ENCODE measurements at regions of chr17 and their contacts with region 1.

Region 1: DNA sequence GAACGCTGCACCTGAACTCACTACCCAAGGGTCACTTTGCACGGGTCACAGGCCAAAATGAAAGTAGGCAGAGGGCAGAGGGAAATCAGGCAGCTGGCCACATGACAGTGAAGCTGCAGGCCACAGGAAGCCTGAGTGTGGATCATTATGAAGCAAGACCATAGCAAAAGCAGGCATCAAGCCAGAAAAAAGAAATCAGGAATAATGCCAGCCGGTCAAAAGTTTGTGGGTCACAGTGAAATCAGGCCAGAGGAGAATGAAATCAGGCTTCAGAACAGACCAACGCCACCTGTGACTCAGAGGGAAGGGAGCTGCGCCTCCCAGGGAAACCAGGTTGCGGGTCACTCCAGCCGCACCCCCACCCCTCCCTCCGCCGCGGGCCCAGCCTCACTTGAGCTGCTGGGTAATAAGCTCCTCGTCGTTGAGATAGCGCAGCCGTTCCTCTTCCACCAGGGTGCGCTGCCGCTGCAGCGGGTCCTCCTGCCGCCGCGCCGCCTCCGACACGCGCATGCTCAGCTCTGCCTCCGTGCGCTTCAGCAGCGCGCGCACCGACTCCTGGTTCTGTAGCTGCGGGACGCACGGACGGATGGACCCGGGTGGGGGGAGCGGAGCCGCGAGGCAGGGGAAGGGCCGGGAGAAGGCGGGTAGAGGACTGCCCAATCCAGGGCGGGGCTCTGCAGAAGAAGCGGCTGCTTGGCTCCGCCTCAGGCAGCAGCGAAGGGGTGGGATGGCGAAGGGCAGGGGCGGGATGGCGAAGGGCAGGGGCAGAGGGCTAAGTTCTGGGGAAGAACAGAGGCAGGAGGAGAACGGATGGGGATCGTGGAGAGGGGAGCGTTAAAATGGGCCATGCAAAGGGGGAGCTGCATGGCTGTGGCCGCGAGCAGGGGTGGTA is 47.7 kb downstream of the SRCIN1 start:
- DNase-seq: peak; percentile 94 to 96 (median 95)
- ATAC-seq: peak; percentile 94
- H3K4me3 ChIP-seq: no peak overlapping the region
- H3K27ac ChIP-seq: peak overlapping the region; percentile 22 to 68 (median 38)
- H3K4me1 ChIP-seq: peaks cover 35% of the 10 kb centered on the region
- H3K27me3 ChIP-seq: peaks cover 0 to 15% of the 10 kb centered on the region in 2 donors
- CTCF ChIP-seq: peak; percentile 84 to 99 (median 95)
- POLR2A ChIP-seq: peak in 1 of 3 donors; percentile 5

Region 2: GRCh38 chr17:38485146-38485468 is 73.0 kb before region 1 on chr17:
- intact Hi-C with region 1: no loop called
- DNase-seq: no peak
- ATAC-seq: no peak
- H3K4me3 ChIP-seq: no peak overlapping the region
- H3K27ac ChIP-seq: no peak overlapping the region
- H3K4me1 ChIP-seq: no peaks in the 10 kb centered on the region
- H3K27me3 ChIP-seq: no peaks in the 10 kb centered on the region
- CTCF ChIP-seq: no peak
- POLR2A ChIP-seq: no peak

Region 3: DNA sequence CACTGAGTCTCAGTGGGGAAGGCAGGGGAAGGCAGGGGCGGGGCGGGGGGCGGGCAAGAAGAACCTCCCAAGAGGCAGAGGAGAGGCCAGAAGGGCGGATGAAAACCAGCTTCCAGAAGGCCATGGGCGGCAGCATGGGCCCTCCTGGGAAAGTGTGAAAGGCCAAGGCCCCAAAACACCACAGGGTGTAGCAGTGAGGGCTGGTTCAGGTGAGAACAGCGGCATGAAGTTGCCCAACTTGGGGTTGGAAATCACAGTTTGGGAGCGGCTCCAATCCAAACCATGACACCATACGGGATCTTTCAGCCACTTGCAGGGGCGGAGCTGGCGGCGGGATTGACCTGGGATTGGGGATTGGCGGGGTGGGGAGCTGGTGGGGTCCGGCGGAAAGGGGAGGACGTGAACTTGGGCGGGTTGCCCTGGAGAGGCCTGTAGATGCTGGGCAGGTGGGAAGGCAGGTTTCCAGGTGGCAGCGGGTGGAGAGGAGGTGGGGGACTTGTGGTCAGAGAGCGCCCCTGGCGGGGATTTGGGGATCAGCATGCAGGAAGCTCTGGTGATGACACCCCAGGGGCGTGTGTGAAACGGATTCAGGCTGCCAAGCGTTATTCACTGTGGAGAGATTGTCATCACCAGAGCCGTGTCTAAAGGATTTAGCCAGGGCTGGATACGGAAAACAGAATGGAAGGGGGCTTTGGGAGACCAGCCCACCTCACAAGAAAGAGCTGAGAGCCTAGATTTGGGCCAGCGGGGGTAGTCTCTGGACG is 48.9 kb before region 1 on chr17:
- intact Hi-C with region 1: no loop called
- DNase-seq: peak; percentile 68 to 83 (median 76)
- ATAC-seq: peak; percentile 62
- H3K4me3 ChIP-seq: no peak overlapping the region
- H3K27ac ChIP-seq: no peak overlapping the region
- H3K4me1 ChIP-seq: peaks cover 16% of the 10 kb centered on the region
- H3K27me3 ChIP-seq: peaks cover 0 to 16% of the 10 kb centered on the region in 2 donors
- CTCF ChIP-seq: peak; percentile 43 to 67 (median 60)
- POLR2A ChIP-seq: no peak

Region 4: GRCh38 chr17:38598536-38598935 is 40.5 kb after region 1 on chr17:
- intact Hi-C with region 1: loop called (anchors 5 kb)
- DNase-seq: peak; percentile 76 to 86 (median 85)
- ATAC-seq: peak; percentile 88
- H3K4me3 ChIP-seq: no peak overlapping the region
- H3K27ac ChIP-seq: no peak overlapping the region
- H3K4me1 ChIP-seq: peaks cover 8% of the 10 kb centered on the region
- H3K27me3 ChIP-seq: no peaks in the 10 kb centered on the region
- CTCF ChIP-seq: no peak
- POLR2A ChIP-seq: no peak